Naive thymus-derived CD4-positive, alpha-beta T cell (primary cell): ENCODE measurements at regions of chr10 and their contacts with region 1.

Region 1: GRCh38 chr10:62082729-62083411 is 181.4 kb downstream of the ARID5B start:
- DNase-seq: peak in 7 of 9 donors; percentile 23 to 70 (median 53)
- ATAC-seq: peak; percentile 83
- H3K4me3 ChIP-seq: peak overlapping the region; percentile 35
- H3K4me3 Mint-ChIP-seq: peak overlapping the region; percentile 46 to 79 (median 72)
- H3K27ac ChIP-seq: peak overlapping the region; percentile 63
- H3K27ac Mint-ChIP-seq: peak overlapping the region; percentile 69 to 92 (median 87)
- H3K4me1 ChIP-seq: peaks cover 23 to 41% of the 10 kb centered on the region in 2 donors
- H3K4me1 Mint-ChIP-seq: peaks cover 28 to 72% (median 58%) of the 10 kb centered on the region in 7 donors
- H3K27me3 ChIP-seq: no peaks in the 10 kb centered on the region
- H3K27me3 Mint-ChIP-seq: no peaks in the 10 kb centered on the region

Region 2: GRCh38 chr10:61869774-61870525 is 212.9 kb before region 1 on chr10:
- CTCF ChIA-PET with region 1: no interaction called
- POLR2A ChIA-PET with region 1: no interaction called
- intact Hi-C with region 1: no loop called
- DNase-seq: no peak
- ATAC-seq: no peak
- H3K4me3 ChIP-seq: no peak overlapping the region
- H3K4me3 Mint-ChIP-seq: no peak overlapping the region
- H3K27ac ChIP-seq: no peak overlapping the region
- H3K27ac Mint-ChIP-seq: no peak overlapping the region
- H3K4me1 ChIP-seq: no peaks in the 10 kb centered on the region
- H3K4me1 Mint-ChIP-seq: peaks cover 0 to 10% (median 4%) of the 10 kb centered on the region in 7 donors
- H3K27me3 ChIP-seq: peaks cover 0 to 3% of the 10 kb centered on the region in 2 donors
- H3K27me3 Mint-ChIP-seq: peaks cover 0 to 15% (median 3%) of the 10 kb centered on the region in 5 donors

Region 3: DNA sequence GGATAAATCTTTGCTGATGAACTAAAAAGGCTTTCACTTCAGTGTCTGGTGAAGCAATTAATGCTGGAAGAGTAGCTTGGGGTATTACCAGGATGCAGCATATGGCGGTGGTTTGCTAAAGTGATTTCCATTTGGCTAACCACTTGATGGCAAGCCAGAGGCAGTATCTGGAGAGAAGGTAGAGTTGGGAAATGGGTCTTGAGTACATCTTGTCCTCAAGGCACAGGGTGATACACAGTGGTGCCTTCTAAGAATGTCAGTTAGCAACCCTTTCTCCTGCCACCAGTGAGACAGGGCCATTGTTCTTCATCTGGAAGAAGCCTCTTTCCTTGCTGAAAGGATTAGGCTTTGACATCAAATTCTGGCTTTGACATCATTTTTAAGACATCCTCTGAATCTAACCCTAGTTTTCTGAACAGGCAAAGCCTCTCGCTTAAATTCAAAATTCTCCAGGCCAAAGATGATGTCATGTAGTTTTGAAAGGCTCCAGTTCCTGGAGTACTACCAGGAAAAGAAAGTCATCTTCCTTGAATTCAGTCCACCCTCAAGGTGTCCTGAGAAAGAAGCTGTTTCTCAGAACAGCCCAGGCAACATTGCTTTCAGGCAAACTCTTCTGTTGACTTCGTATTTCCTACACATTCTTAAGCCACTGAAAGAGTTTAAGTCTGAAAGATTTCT is 18.9 kb before region 1 on chr10:
- CTCF ChIA-PET with region 1: no interaction called
- POLR2A ChIA-PET with region 1: interaction called, 3 read pairs
- intact Hi-C with region 1: loop called in 1 of 2 experiments (anchors 2 kb)
- DNase-seq: no peak
- ATAC-seq: no peak
- H3K4me3 ChIP-seq: no peak overlapping the region
- H3K4me3 Mint-ChIP-seq: peak overlapping the region in 4 of 10 donors; percentile 5 to 74 (median 51)
- H3K27ac ChIP-seq: peak overlapping the region; percentile 3
- H3K27ac Mint-ChIP-seq: peak overlapping the region in 8 of 9 donors; percentile 39 to 91 (median 60)
- H3K4me1 ChIP-seq: peaks cover 3 to 21% of the 10 kb centered on the region in 2 donors
- H3K4me1 Mint-ChIP-seq: peaks cover 19 to 88% (median 54%) of the 10 kb centered on the region in 7 donors
- H3K27me3 ChIP-seq: no peaks in the 10 kb centered on the region
- H3K27me3 Mint-ChIP-seq: no peaks in the 10 kb centered on the region